ENCODE measurements at regions of chr1 and their contacts with region 1.

Region 1: DNA sequence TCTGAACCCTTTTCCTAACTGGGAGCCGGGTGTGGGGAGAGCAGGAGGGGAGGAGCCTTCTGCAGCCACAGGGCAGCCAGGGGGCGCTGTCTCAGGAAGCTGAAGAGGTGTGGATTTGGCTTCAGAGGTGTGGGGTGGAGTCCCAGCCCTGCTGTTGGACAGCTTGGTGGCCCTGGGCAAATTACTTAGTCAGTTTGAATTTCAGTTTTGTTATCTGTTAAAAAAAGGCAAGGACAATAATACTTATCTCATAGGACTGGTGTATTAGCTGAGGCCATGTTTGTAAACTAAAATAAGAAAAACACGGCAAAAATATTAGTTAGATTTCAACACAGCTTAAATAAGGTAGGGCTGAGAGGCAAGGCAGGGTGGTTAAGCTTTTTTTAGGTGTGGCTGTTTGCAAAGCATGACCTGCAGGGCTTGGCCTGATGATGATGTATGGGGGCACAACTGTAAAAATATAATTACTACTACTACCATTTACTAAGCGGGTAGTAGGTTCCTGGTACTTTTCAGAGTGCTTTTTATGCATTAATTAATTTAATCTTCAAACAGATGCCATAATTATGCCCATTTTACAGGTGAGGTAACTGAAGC is 111.8 kb downstream of the PLXNA2 start:
- DNase-seq: peak; percentile 66 to 84 (median 77)
- H3K4me3 ChIP-seq: no peak overlapping the region
- H3K27ac ChIP-seq: no peak overlapping the region
- H3K4me1 ChIP-seq: no peaks in the 10 kb centered on the region
- H3K27me3 ChIP-seq: no peaks in the 10 kb centered on the region
- CTCF ChIP-seq: peak; percentile 64 to 80 (median 74)
- POLR2A ChIP-seq: no peak

Region 2: GRCh38 chr1:208239473-208240381 is 107.3 kb after region 1 on chr1:
- intact Hi-C with region 1: loop called (anchors 2 to 5 kb)
- DNase-seq: peak in 1 of 7 donors; percentile 44
- H3K4me3 ChIP-seq: no peak overlapping the region
- H3K27ac ChIP-seq: no peak overlapping the region
- H3K4me1 ChIP-seq: peaks cover 0 to 24% of the 10 kb centered on the region in 2 donors
- H3K27me3 ChIP-seq: no peaks in the 10 kb centered on the region
- CTCF ChIP-seq: no peak
- POLR2A ChIP-seq: no peak